ENCODE measurements at regions of chr15 and their contacts with region 1.

Region 1: DNA sequence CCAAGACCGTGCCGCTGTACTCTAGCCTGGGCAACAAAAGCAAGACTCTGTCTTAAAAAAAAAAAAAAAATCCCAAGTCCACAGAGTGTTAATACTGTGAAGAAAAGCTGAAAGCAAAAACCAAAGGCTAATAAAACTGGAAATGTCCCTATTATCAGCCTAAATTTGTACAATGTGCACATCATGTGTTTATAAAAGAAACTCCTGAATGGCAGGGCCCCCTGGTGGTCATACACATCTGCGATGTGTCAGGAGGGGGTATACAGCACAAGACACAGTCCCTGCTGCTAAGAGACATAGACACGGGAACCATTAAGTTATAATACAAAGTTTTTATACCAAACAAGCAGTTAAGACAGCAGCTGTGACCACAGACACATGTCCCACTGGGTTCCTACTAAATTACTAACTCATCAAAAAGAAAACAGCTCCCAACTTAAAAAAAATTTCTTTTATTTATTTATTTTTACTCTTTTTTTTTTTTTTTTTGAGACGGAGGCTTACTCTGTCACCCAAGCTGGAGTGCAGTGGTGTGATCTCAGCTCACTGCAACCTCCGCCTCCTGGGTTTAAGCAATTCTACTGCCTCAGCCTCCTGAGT is 31.0 kb downstream of the IDH2 start:
- DNase-seq: peak; percentile 70 to 86 (median 79)
- H3K4me3 ChIP-seq: no peak overlapping the region
- H3K4me3 Mint-ChIP-seq: no peak overlapping the region
- H3K27ac ChIP-seq: no peak overlapping the region
- H3K27ac Mint-ChIP-seq: peak overlapping the region in 5 of 7 donors; percentile 3 to 83 (median 68)
- H3K4me1 ChIP-seq: peaks cover 3% of the 10 kb centered on the region
- H3K4me1 Mint-ChIP-seq: peaks cover 2 to 12% (median 9%) of the 10 kb centered on the region in 4 donors
- H3K27me3 ChIP-seq: no peaks in the 10 kb centered on the region
- H3K27me3 Mint-ChIP-seq: no peaks in the 10 kb centered on the region

Region 2: GRCh38 chr15:89760303-89761008 is 310.9 kb before region 1 on chr15:
- CTCF ChIA-PET with region 1: interaction called, 20 read pairs
- POLR2A ChIA-PET with region 1: no interaction called
- intact Hi-C with region 1: loop called (anchors 2 kb)
- DNase-seq: peak in 4 of 5 donors; percentile 43 to 53 (median 50)
- H3K4me3 ChIP-seq: no peak overlapping the region
- H3K4me3 Mint-ChIP-seq: no peak overlapping the region
- H3K27ac ChIP-seq: no peak overlapping the region
- H3K27ac Mint-ChIP-seq: peak overlapping the region in 1 of 7 donors; percentile 68
- H3K4me1 ChIP-seq: no peaks in the 10 kb centered on the region
- H3K4me1 Mint-ChIP-seq: no peaks in the 10 kb centered on the region
- H3K27me3 ChIP-seq: no peaks in the 10 kb centered on the region
- H3K27me3 Mint-ChIP-seq: peaks cover 0 to 14% of the 10 kb centered on the region in 2 donors

Region 3: GRCh38 chr15:89888214-89888804 is 183.0 kb before region 1 on chr15:
- CTCF ChIA-PET with region 1: interaction called, 95 read pairs
- POLR2A ChIA-PET with region 1: interaction called, 20 read pairs
- intact Hi-C with region 1: no loop called
- DNase-seq: no peak
- H3K4me3 ChIP-seq: no peak overlapping the region
- H3K4me3 Mint-ChIP-seq: no peak overlapping the region
- H3K27ac ChIP-seq: no peak overlapping the region
- H3K27ac Mint-ChIP-seq: peak overlapping the region in 1 of 7 donors; percentile 24
- H3K4me1 ChIP-seq: peaks cover 33% of the 10 kb centered on the region
- H3K4me1 Mint-ChIP-seq: peaks cover 21 to 40% (median 30%) of the 10 kb centered on the region in 4 donors
- H3K27me3 ChIP-seq: no peaks in the 10 kb centered on the region
- H3K27me3 Mint-ChIP-seq: no peaks in the 10 kb centered on the region

Region 4: DNA sequence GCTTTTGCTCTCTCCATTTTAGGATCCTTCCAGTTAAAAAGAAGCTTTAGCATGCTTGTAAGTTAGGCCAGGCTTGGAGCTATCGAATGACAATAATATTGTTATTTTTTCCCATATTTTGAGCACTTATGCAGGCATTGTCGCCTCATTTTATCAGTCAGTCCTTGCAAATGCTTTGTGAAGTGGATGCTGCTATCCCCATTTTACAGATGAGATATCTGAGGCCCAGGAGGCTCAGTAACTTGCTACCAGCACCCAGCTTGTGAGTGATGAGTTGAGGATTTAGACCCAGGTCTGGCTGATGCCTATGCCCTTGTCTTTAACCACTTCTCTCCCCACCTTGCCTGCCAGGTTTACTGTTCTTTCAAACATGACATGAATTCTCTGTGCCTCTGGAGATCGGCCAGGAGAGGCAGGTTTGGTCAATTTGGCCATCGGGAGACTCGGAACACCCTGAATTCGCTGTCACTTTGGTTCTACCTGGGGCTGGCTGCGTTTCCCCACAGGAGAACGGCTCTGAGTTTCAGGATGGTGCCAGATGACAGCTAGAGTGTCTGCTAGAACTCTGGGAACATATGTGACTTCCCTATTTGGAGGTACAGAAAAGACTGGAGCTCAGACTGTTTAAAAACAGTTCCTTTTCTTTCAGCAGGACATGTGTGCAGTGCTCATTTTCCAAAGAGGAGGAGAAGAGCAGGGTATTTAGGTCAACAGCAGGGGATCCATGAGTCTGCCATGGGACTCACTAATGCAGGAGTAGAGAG is 95.6 kb before region 1 on chr15:
- CTCF ChIA-PET with region 1: interaction called, 13 read pairs
- POLR2A ChIA-PET with region 1: no interaction called
- intact Hi-C with region 1: no loop called
- DNase-seq: no peak
- H3K4me3 ChIP-seq: no peak overlapping the region
- H3K4me3 Mint-ChIP-seq: no peak overlapping the region
- H3K27ac ChIP-seq: no peak overlapping the region
- H3K27ac Mint-ChIP-seq: no peak overlapping the region
- H3K4me1 ChIP-seq: no peaks in the 10 kb centered on the region
- H3K4me1 Mint-ChIP-seq: peaks cover 0 to 3% (median 0%) of the 10 kb centered on the region in 4 donors
- H3K27me3 ChIP-seq: no peaks in the 10 kb centered on the region
- H3K27me3 Mint-ChIP-seq: peaks cover 0 to 1% of the 10 kb centered on the region in 2 donors

Region 5: DNA sequence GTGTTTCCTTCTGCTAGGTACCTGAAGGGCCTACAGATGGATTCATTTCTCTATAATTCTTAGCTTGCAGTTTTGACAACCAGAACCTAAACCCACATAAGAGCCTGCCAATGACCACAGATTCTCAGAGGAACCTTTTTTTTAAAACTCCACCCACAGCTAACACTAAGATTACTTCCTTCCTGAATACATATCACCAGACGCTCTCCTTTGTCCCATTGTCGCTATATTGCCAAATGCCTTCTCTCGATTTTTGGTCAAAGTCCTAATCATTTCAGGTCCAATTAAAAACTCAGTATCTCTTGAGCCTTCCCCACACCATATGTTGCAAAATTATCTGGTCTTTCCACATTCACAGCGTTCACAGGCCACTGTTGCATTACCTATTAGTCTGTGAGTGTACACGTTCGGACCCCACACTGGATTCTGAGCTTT is 57.8 kb before region 1 on chr15:
- CTCF ChIA-PET with region 1: interaction called, 18 read pairs
- POLR2A ChIA-PET with region 1: interaction called, 3 read pairs
- intact Hi-C with region 1: no loop called
- DNase-seq: peak; percentile 59 to 83 (median 77)
- H3K4me3 ChIP-seq: peak overlapping the region; percentile 12 to 27
- H3K4me3 Mint-ChIP-seq: peak overlapping the region; percentile 52 to 86 (median 80)
- H3K27ac ChIP-seq: no peak overlapping the region
- H3K27ac Mint-ChIP-seq: peak overlapping the region; percentile 7 to 90 (median 88)
- H3K4me1 ChIP-seq: peaks cover 72% of the 10 kb centered on the region
- H3K4me1 Mint-ChIP-seq: peaks cover 40 to 67% (median 51%) of the 10 kb centered on the region in 4 donors
- H3K27me3 ChIP-seq: no peaks in the 10 kb centered on the region
- H3K27me3 Mint-ChIP-seq: no peaks in the 10 kb centered on the region

Region 6: GRCh38 chr15:90059208-90059985 is 11.9 kb before region 1 on chr15:
- CTCF ChIA-PET with region 1: interaction called, 23 read pairs
- POLR2A ChIA-PET with region 1: no interaction called
- intact Hi-C with region 1: no loop called
- DNase-seq: peak; percentile 64 to 81 (median 72)
- H3K4me3 ChIP-seq: peak overlapping the region in 1 of 2 donors; percentile 51
- H3K4me3 Mint-ChIP-seq: peak overlapping the region in 7 of 8 donors; percentile 35 to 82 (median 71)
- H3K27ac ChIP-seq: peak overlapping the region; percentile 62
- H3K27ac Mint-ChIP-seq: peak overlapping the region; percentile 90 to 97 (median 94)
- H3K4me1 ChIP-seq: peaks cover 49% of the 10 kb centered on the region
- H3K4me1 Mint-ChIP-seq: peaks cover 37 to 70% (median 49%) of the 10 kb centered on the region in 4 donors
- H3K27me3 ChIP-seq: no peaks in the 10 kb centered on the region
- H3K27me3 Mint-ChIP-seq: no peaks in the 10 kb centered on the region

Region 7: DNA sequence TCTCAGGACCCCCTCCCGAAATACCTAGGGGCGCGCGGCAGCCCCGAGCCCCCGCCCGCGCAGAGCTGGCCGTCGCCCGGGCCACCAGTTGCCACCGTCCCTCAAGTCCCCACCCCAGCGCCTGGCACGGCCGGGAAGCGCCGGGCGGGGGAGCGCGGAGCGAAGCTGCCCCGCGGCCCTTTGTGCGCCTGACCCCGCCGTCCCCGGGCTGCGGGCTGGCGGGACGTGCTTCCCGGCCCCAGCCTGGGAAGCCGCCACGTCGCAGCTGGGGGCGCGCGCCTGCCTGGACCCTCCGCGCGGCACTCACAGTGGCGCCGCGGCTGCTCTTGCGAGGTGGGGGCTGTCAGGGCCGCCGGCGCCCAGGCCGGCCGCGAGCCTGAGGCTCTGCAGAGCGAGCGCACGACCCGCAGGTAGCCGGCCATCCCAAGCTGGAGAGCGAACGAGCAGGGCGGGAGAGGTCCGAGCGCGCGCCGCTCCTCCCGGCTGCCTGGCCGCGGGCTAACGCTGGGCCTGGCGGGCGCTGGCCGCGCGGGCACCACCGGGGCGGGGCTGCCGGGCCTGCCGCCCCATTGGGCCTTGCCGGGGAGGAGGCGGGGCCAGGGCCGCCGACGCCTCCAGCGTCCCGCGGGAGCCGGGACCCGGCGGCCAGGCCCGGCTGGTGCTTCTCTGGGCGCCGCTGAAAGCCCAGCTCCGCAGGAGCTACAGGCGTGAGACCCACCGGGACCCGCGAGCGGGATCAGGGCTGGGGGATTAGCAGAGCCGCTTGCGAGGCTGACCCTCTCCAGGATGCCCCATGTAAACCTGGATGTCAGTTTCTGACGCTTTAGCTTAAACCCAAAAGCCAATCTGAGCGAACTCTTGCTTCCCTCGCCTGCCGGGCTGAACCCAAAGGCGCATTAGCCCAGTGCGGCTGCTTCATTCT is 30.9 kb after region 1 on chr15 and contains the start of gene IDH2:
- CTCF ChIA-PET with region 1: interaction called, 11 read pairs
- POLR2A ChIA-PET with region 1: interaction called, 3 read pairs
- intact Hi-C with region 1: no loop called
- DNase-seq: peak; percentile 65 to 82 (median 75)
- H3K4me3 ChIP-seq: peak within 1 kb of the TSS; percentile 70 to 79
- H3K4me3 Mint-ChIP-seq: peak within 1 kb of the TSS; percentile 85 to 97 (median 90)
- H3K27ac ChIP-seq: peak within 1 kb of the TSS; percentile 65
- H3K27ac Mint-ChIP-seq: peak within 1 kb of the TSS; percentile 86 to 100 (median 98)
- H3K4me1 ChIP-seq: peaks cover 47% of the 10 kb centered on the region
- H3K4me1 Mint-ChIP-seq: peaks cover 35 to 55% (median 49%) of the 10 kb centered on the region in 4 donors
- H3K27me3 ChIP-seq: no peaks in the 10 kb centered on the region
- H3K27me3 Mint-ChIP-seq: no peaks in the 10 kb centered on the region
- total RNA-seq, gene IDH2: 41.2 to 43.6 TPM